ENCODE measurements at regions of chr11 and their contacts with region 1.

Region 1: GRCh38 chr11:68903288-68904247 is at the starts of genes IGHMBP2 and MRPL21:
- DNase-seq: peak; percentile 82 to 88 (median 85)
- H3K4me3 ChIP-seq: peak within 1 kb of the TSS; percentile 70 to 93 (median 84)
- H3K4me3 Mint-ChIP-seq: peak within 1 kb of the TSS; percentile 99 to 100
- H3K27ac ChIP-seq: peak within 1 kb of the TSS; percentile 48 to 87
- H3K27ac Mint-ChIP-seq: peak within 1 kb of the TSS; percentile 92 to 97 (median 94)
- H3K4me1 ChIP-seq: peaks cover 17 to 24% of the 10 kb centered on the region in 2 donors
- H3K4me1 Mint-ChIP-seq: peaks cover 36% of the 10 kb centered on the region
- H3K27me3 ChIP-seq: no peaks in the 10 kb centered on the region
- H3K27me3 Mint-ChIP-seq: peaks cover 0 to 3% (median 0%) of the 10 kb centered on the region in 3 donors
- CTCF ChIP-seq: no peak
- polyA plus RNA-seq, gene IGHMBP2: 3.9 to 14.9 (median 6.0) TPM
- polyA plus RNA-seq, gene MRPL21: 38.8 to 138 (median 104) TPM

Region 2: DNA sequence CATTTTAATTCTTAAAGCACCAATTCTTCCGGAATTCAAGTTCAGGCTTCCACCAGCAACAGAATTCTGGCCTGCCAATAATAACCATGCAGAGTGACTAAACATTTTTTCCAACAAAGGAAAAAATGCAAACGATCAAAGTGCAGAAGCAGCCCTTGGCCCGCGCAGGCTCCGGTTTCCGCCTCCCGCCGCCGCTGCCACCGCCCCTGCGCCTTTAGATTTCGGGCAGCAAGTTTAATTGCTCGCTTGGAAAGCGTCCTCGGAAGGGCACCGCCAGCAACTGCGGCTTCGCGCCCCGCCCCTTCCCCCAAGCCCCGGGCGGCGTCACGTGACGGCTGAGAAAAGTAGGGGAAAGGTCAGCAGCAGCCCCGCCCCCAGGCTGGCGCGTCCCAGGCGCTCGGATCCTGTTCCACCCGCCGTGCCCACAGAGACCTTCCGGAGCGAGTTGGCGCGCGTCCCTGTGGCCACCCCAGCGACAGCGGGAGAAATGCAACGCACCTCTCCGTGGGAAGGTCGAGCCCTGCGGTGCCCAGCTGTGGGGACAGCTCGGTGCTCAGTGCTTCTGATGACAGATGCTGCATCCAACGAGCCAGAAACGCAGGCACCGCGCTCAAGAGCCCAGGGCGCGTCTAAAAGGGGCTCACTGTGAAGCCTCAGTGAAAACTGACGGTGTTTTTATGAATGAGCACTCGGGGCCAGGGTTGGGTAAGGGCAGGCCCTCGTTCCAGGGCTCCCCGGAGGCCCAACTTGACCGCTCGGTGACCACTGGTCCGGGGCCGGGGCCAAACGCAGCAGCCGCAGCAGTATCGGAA is 64.3 kb before region 1 on chr11:
- intact Hi-C with region 1: loop called (anchors 5 kb)
- DNase-seq: peak; percentile 91 to 94 (median 93)
- H3K4me3 ChIP-seq: peak overlapping the region; percentile 76 to 91 (median 89)
- H3K4me3 Mint-ChIP-seq: peak overlapping the region; percentile 81 to 89
- H3K27ac ChIP-seq: peak overlapping the region; percentile 94
- H3K27ac Mint-ChIP-seq: peak overlapping the region; percentile 88 to 97 (median 93)
- H3K4me1 ChIP-seq: peaks cover 74 to 89% of the 10 kb centered on the region in 2 donors
- H3K4me1 Mint-ChIP-seq: peaks cover 72% of the 10 kb centered on the region
- H3K27me3 ChIP-seq: no peaks in the 10 kb centered on the region
- H3K27me3 Mint-ChIP-seq: no peaks in the 10 kb centered on the region
- CTCF ChIP-seq: no peak

Region 3: DNA sequence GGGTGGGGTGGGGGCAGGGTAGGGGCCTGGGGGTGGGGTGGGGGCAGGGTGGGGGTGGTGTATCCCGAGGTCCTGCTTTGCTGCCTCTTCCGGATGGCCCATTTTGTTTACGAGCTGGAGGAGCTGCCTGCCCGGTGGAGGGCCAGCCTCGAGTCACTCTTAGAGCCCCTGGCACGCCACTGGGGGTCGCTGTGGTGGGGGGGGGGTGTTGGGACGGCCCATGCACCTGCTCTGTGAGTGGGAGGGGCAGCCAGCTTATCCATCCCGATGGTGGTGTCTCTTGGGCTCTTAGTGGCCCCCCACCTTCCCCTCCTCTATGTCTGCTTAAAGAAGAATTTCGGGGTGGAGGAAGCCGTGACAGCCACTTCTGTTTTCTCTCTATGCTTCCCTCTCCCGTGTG is 52.6 kb after region 1 on chr11:
- intact Hi-C with region 1: no loop called
- DNase-seq: peak; percentile 24 to 52 (median 30)
- H3K4me3 ChIP-seq: peak overlapping the region in 1 of 3 experiments; percentile 60
- H3K4me3 Mint-ChIP-seq: peak overlapping the region; percentile 65 to 73
- H3K27ac ChIP-seq: no peak overlapping the region
- H3K27ac Mint-ChIP-seq: peak overlapping the region in 2 of 7 donors; percentile 43 to 68
- H3K4me1 ChIP-seq: peaks cover 18 to 19% of the 10 kb centered on the region in 2 donors
- H3K4me1 Mint-ChIP-seq: peaks cover 12% of the 10 kb centered on the region
- H3K27me3 ChIP-seq: no peaks in the 10 kb centered on the region
- H3K27me3 Mint-ChIP-seq: peaks cover 3 to 6% (median 4%) of the 10 kb centered on the region in 3 donors
- CTCF ChIP-seq: peak; percentile 33